Posterior vena cava (tissue), 2 donors: ENCODE measurements at regions of chr1 and their contacts with region 1.

Region 1: GRCh38 chr1:111789666-111790316 is 34.1 kb downstream of the DDX20 start:
- DNase-seq: no peak

Region 2: DNA sequence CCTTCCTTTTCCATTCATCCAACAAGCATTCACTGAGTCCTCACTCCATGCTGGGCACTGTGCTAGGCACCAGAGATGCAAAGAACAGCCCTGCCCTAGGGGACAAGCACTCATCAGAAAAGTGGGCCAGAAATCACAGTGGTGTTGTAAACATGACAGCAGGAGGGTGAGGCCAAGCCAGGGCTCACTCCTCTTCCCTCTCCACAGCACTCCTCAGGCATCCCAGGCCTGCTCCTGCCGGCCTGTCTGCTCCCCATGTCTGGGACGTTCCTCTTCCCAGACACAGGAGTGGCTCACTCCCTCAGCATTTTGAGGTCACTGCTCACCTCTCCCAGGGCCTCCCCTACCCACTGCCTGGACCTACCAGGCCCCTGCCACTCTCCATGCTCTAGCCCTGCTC is 137.9 kb after region 1 on chr1:
- intact Hi-C with region 1: no loop called
- DNase-seq: no peak

Region 3: DNA sequence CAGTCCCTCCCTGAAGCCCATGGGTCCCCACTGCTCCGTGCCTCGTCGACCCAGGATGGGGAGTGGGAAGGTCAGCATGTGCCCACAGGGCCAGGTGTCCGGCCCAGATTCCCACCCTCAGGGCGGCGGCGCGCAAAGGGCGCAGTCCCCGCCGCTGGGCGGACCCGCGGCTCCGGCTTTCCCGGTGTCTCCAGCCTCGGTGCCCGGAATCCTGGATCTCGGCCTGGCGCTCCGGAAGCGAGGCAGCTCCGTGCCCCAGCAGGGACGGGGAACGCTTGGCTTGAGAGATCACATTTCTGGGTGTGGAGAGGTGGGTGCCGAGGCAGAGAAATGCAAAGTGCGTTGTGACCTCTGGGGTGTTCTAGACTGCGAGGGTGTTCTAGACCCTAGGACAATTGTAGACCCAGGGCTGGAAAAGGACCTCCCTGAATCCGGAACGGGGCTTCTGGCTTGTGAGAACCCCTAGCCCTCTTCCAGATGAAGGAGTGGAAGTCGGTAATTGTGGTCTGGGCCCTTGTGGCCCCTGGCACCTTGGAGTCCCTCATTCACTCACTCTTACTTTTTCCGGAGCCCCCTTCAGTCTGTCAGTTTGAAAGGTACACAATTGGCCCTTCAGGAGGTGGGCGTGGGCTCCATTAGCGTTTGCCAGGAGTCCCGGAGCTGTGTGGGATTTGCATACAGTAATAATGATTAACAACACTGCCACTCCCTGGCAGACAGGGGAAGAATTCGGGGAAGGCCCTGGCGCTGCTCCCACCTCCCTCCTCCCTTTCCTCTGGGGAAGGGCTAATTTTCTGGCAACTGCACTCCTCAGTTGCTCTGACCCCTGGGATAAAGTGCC is 201.3 kb after region 1 on chr1:
- intact Hi-C with region 1: loop called (anchors 5 to 10 kb)
- DNase-seq: peak; percentile 91

Region 4: GRCh38 chr1:112054510-112054909 is 264.7 kb after region 1 on chr1:
- intact Hi-C with region 1: no loop called
- DNase-seq: no peak

Region 5: DNA sequence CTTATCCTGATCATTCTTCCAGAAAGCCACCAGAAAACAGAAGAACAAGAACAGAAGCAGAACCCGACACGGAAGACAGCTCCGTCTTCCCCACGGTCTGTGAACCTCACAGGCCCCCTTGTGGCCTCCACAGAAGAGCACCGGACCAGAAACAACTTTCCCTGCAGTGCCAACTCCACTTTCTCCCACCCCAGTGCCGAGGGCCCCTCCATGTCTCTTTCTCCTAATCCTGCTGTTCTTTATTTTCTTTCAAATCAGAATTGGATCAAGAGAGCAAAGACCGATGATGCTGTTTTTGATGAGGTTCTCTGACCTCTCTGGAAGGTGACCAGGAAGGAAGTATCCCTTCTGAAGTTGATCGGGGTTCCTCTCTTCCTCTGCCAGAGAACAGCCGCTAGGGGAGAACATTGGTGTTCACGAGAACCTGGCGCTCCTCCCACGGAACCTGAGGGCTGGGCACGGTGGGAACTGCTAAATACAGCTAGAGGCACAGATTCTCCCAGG is 547.3 kb after region 1 on chr1:
- intact Hi-C with region 1: loop called in 1 of 2 experiments (anchors 10 kb)
- DNase-seq: no peak